Ascending aorta (tissue), 2 donors: ENCODE measurements at regions of chr1 and their contacts with region 1.

Region 1: GRCh38 chr1:27392096-27392777 is at the start of gene GPR3:
- DNase-seq: peak; percentile 71 to 95
- H3K4me3 ChIP-seq: peak within 1 kb of the TSS; percentile 52 to 74
- H3K27ac ChIP-seq: peak within 1 kb of the TSS; percentile 36 to 56
- H3K4me1 ChIP-seq: peaks cover 13 to 14% of the 10 kb centered on the region in 2 donors
- H3K27me3 ChIP-seq: no peaks in the 10 kb centered on the region
- CTCF ChIP-seq: peak; percentile 55 to 75 (median 65)
- total RNA-seq, gene GPR3: 2.0 TPM

Region 2: GRCh38 chr1:27111626-27112573 is 280.3 kb before region 1 on chr1:
- intact Hi-C with region 1: loop called (anchors 10 kb)
- DNase-seq: peak; percentile 87 to 94
- H3K4me3 ChIP-seq: no peak overlapping the region
- H3K27ac ChIP-seq: peak overlapping the region; percentile 60 to 67
- H3K4me1 ChIP-seq: peaks cover 4 to 23% of the 10 kb centered on the region in 2 donors
- H3K27me3 ChIP-seq: no peaks in the 10 kb centered on the region
- CTCF ChIP-seq: peak in 2 of 3 experiments; percentile 9 to 31

Region 3: GRCh38 chr1:27300341-27301051 is 91.7 kb before region 1 on chr1:
- intact Hi-C with region 1: loop called (anchors 1 kb)
- DNase-seq: peak; percentile 46 to 88
- H3K4me3 ChIP-seq: no peak overlapping the region
- H3K27ac ChIP-seq: peak overlapping the region; percentile 67 to 71
- H3K4me1 ChIP-seq: peaks cover 0 to 15% of the 10 kb centered on the region in 2 donors
- H3K27me3 ChIP-seq: no peaks in the 10 kb centered on the region
- CTCF ChIP-seq: peak; percentile 98 to 99 (median 99)

Region 4: GRCh38 chr1:27357281-27358037 is 34.8 kb before region 1 on chr1:
- intact Hi-C with region 1: loop called (anchors 1 kb)
- DNase-seq: peak in 1 of 2 donors; percentile 80
- H3K4me3 ChIP-seq: peak overlapping the region in 1 of 2 donors; percentile 26
- H3K27ac ChIP-seq: peak overlapping the region in 1 of 2 donors; percentile 12
- H3K4me1 ChIP-seq: no peaks in the 10 kb centered on the region
- H3K27me3 ChIP-seq: no peaks in the 10 kb centered on the region
- CTCF ChIP-seq: peak; percentile 93 to 96 (median 94)

Region 5: DNA sequence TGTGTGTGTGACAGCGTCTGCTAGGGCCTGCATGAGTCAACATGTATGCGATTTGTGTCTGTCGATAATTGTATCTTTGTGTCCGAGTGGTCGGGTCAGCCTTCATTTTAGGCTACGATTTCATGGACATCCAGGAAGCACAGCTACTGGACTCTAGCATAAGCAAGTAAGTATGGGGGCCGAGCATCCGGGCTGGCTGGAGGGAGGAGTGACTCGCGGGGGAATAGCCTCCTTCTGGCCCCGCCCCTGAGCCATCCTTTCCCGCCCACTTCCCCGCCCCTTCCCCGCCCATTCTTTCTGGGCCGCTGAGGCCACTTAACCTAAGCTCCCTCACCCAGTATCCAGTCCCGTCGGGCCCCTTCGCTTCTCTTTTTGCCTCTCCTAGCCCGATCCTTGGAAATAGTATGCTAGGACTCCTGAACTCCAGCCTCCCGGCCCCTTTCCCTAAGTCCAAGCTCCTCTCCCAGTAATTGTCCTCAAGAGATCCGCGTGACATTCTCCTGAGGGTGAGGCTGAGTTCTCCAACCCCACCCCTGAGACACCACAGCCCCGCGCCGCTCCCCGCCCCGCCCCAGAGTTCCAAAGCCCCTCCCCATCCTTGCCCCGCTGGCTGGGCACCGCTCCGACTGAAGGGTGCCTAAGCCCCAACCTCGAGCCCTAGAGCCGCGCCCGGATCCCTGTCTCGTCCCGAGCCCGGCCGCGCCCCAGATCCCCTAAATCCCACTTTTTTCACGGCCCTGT is 26.7 kb before region 1 on chr1:
- intact Hi-C with region 1: loop called (anchors 1 kb)
- DNase-seq: peak; percentile 66 to 95
- H3K4me3 ChIP-seq: peak overlapping the region; percentile 70 to 96
- H3K27ac ChIP-seq: peak overlapping the region; percentile 97 to 99
- H3K4me1 ChIP-seq: peaks cover 21 to 23% of the 10 kb centered on the region in 2 donors
- H3K27me3 ChIP-seq: no peaks in the 10 kb centered on the region
- CTCF ChIP-seq: no peak

Region 6: DNA sequence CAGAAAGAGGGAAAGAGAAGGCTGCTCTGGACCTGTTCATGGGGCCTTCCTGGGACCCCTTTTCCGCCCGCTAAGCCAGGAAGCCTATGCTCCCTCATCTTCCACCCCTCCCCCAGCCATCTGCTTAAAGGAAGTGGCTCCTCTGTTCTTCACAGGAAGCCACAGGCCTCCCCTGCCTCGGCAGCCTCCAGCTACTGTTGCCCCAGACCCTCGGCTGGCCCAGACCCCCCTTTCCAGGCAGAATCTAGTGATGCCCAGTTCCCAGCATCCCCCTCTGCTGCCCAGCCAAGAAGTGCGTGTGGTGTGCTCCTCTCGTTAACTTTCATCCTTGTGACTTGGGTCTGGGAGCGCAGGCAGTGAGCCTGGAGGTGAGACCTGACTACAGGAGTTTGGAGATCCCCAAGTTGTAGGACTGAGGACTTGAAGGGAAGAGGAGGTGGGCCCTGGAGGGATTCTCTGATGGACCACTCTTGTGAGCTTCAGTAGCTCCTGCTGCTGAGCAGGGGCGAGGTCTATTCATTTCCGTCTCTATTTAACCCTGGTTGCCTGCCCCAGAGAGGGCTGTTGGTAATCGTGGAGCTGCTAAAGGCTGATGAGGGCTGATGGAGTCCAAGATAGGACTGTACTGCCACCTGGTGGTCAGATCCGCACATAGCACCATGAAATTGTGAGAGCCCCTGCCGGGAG is 270.6 kb after region 1 on chr1:
- intact Hi-C with region 1: loop called (anchors 2 kb)
- DNase-seq: peak; percentile 39 to 93
- H3K4me3 ChIP-seq: no peak overlapping the region
- H3K27ac ChIP-seq: peak overlapping the region; percentile 35 to 39
- H3K4me1 ChIP-seq: peaks cover 4 to 20% of the 10 kb centered on the region in 2 donors
- H3K27me3 ChIP-seq: no peaks in the 10 kb centered on the region
- CTCF ChIP-seq: peak; percentile 83 to 97 (median 83)